Mammary epithelial cell (primary cell): ENCODE measurements at regions of chr5 and their contacts with region 1.

Region 1: DNA sequence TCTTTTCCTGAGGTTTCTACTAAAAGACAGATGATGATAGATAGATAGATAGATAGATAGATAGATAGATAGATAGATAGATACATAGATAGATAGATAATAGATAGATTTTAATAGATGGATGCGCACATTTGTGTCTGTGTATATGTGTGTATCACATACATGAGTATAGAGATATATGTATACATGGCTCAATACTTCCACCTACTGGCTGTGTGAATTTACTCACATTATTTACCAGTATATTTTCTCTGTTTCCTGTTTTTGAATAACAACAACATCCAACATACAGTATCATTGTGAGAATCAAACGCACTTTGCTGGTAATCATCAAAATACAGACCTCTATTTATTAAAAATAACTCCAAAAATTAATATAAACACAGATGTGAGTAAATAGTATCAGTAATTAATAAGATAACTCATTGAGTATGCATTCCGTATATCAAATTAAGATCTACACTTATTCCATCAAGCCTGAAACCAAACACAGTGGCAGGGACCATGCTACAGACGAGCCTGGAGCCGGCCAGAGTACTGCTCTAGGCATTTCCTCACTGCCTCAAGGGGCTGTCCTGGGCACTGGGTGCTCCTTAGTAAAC is 338.0 kb downstream of the SEMA5A start:
- DNase-seq: peak; percentile 23
- H3K4me3 ChIP-seq: no peak overlapping the region
- H3K27ac ChIP-seq: no peak overlapping the region
- H3K4me1 ChIP-seq: peaks cover 22% of the 10 kb centered on the region
- H3K27me3 ChIP-seq: no peaks in the 10 kb centered on the region
- CTCF ChIP-seq: peak; percentile 42 to 51

Region 2: GRCh38 chr5:8756498-8757084 is 451.3 kb before region 1 on chr5:
- CTCF ChIA-PET with region 1: no interaction called
- dilution Hi-C with region 1: no loop called
- in situ Hi-C with region 1: loop called in 1 of 2 experiments (anchors 10 kb)
- intact Hi-C with region 1: loop called (anchors 1 kb)
- DNase-seq: peak; percentile 28
- H3K4me3 ChIP-seq: no peak overlapping the region
- H3K27ac ChIP-seq: no peak overlapping the region
- H3K4me1 ChIP-seq: no peaks in the 10 kb centered on the region
- H3K27me3 ChIP-seq: no peaks in the 10 kb centered on the region
- CTCF ChIP-seq: peak; percentile 57 to 80

Region 3: GRCh38 chr5:8864053-8864452 is 343.9 kb before region 1 on chr5:
- CTCF ChIA-PET with region 1: no interaction called
- dilution Hi-C with region 1: no loop called
- in situ Hi-C with region 1: no loop called
- intact Hi-C with region 1: loop called (anchors 1 kb)
- DNase-seq: peak; percentile 40
- H3K4me3 ChIP-seq: no peak overlapping the region
- H3K27ac ChIP-seq: no peak overlapping the region
- H3K4me1 ChIP-seq: peaks cover 4% of the 10 kb centered on the region
- H3K27me3 ChIP-seq: no peaks in the 10 kb centered on the region
- CTCF ChIP-seq: peak; percentile 70 to 82

Region 4: GRCh38 chr5:8949908-8950307 is 258.0 kb before region 1 on chr5:
- CTCF ChIA-PET with region 1: no interaction called
- dilution Hi-C with region 1: no loop called
- in situ Hi-C with region 1: no loop called
- intact Hi-C with region 1: loop called (anchors 10 kb)
- DNase-seq: no peak
- H3K4me3 ChIP-seq: no peak overlapping the region
- H3K27ac ChIP-seq: no peak overlapping the region
- H3K4me1 ChIP-seq: no peaks in the 10 kb centered on the region
- H3K27me3 ChIP-seq: no peaks in the 10 kb centered on the region
- CTCF ChIP-seq: no peak

Region 5: DNA sequence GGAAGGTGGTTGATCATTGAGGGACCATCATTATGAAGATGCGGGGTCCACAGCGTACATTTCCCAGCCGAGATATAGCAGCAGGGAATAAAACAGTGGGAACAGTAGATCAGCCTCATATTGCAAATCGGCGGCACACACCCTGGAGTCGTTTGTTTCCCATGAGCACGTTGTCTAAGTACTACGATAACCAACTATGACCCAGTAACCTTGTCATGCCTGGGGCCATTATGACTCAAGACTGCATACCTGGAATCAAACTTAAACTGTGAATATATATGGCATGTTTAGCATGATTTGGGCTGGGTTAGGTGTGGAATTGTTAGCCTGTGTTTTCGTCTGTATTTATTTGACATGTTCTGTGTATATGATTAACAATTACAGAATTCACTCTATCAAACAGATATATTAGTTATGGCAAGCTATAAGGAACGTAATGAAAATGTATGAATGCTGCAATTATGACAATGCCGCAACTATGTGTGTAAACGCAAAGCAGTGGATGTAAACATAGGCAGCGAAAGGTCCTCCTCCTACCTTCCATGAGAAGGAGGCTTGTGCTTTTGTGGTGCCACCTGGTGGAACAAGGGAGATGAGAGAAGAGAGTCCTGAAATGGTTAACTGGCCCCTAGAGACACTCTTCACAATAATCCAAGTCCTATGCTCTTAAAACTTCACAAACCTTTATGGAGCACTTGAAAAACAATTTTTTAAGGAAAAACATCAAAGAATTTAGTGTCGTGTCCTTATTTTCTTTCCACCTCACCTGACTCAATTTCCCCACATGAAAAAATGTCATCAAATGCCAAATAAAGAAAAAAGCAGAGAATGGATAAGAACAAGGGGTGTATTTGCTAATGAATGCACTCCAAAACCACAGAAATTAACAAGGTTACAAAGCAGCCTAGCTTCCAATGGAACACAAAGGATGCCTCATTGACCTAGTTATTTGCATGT is 290.9 kb after region 1 on chr5:
- CTCF ChIA-PET with region 1: no interaction called
- dilution Hi-C with region 1: no loop called
- in situ Hi-C with region 1: no loop called
- intact Hi-C with region 1: loop called (anchors 2 kb)
- DNase-seq: peak; percentile 47
- H3K4me3 ChIP-seq: no peak overlapping the region
- H3K27ac ChIP-seq: no peak overlapping the region
- H3K4me1 ChIP-seq: no peaks in the 10 kb centered on the region
- H3K27me3 ChIP-seq: no peaks in the 10 kb centered on the region
- CTCF ChIP-seq: peak; percentile 52 to 80